ENCODE measurements at regions of chr11 and their contacts with region 1.

Region 1: GRCh38 chr11:133064152-133064877 is 468.0 kb downstream of the OPCML start:
- DNase-seq: peak; percentile 56 to 91 (median 83)
- ATAC-seq: peak; percentile 93 to 97 (median 94)
- H3K4me3 ChIP-seq: peak overlapping the region; percentile 14 to 70 (median 62)
- H3K27ac ChIP-seq: peak overlapping the region in 9 of 12 donors; percentile 36 to 75 (median 69)
- H3K4me1 ChIP-seq: peaks cover 0 to 14% (median 1%) of the 10 kb centered on the region in 12 donors
- H3K27me3 ChIP-seq: peaks cover 0 to 11% (median 0%) of the 10 kb centered on the region in 9 donors
- CTCF ChIP-seq: peak; percentile 57 to 79 (median 66)
- POLR2A ChIP-seq: no peak

Region 2: DNA sequence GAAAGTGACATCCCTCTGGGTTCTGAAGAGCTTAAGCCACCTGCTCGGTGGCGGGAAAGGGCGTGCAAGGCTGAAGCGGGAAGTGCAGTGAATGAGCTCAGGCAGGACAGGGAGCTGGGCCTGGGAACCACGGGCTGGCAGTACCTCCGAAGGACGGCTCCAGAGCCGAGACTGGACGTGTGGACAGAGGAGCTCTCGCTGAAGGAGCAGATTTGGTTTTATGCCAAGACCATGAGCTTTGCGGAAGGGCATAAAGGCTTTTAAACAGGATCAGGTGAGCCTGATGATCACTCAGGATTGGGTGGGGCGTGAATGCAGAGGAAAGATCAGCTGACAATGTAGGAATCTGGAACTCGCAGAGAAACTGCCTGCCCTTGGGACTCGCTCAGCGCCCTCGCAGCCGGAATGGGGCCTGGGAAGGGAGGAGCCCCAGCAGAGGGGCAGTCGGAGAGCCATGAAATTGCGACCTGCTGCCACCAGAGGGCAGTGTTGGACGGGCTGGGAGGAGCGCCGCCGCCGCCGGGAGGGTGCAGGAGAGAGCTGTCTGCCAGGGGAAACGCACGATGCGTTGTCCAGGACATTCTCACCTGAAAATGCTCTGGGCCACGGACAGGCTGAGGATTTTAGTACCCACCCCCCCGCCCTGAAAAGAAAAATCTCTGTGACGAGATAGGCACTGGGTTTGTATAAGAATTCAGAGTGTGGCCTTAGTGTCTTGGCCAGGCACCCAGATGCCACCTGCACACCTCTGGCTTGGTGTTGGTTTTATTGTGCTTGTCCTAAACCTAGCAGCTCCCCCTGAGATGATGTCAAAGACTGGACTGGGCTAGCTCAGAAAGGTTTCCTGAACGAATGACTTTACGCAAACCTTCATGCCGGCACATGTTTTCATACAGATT is 1369.5 kb before region 1 on chr11:
- intact Hi-C with region 1: loop called in 3 of 10 experiments (anchors 5 to 10 kb)
- DNase-seq: peak; percentile 79 to 89 (median 83)
- ATAC-seq: peak; percentile 80 to 94 (median 92)
- H3K4me3 ChIP-seq: peak overlapping the region in 5 of 12 donors; percentile 5 to 23 (median 16)
- H3K27ac ChIP-seq: peak overlapping the region in 1 of 12 donors; percentile 8
- H3K4me1 ChIP-seq: peaks cover 0 to 9% (median 4%) of the 10 kb centered on the region in 12 donors
- H3K27me3 ChIP-seq: peaks cover 0 to 53% (median 7%) of the 10 kb centered on the region in 9 donors
- CTCF ChIP-seq: peak; percentile 83 to 98 (median 95)
- POLR2A ChIP-seq: no peak

Region 3: GRCh38 chr11:131748151-131749050 is 1315.9 kb before region 1 on chr11:
- intact Hi-C with region 1: loop called in 1 of 10 experiments (anchors 5 kb)
- DNase-seq: peak in 3 of 5 donors; percentile 34 to 56 (median 45)
- ATAC-seq: peak in 3 of 4 donors; percentile 74 to 90 (median 75)
- H3K4me3 ChIP-seq: no peak overlapping the region
- H3K27ac ChIP-seq: no peak overlapping the region
- H3K4me1 ChIP-seq: peaks cover 0 to 14% (median 0%) of the 10 kb centered on the region in 12 donors
- H3K27me3 ChIP-seq: peaks cover 0 to 26% (median 0%) of the 10 kb centered on the region in 9 donors
- CTCF ChIP-seq: peak; percentile 58 to 85 (median 73)
- POLR2A ChIP-seq: no peak

Region 4: DNA sequence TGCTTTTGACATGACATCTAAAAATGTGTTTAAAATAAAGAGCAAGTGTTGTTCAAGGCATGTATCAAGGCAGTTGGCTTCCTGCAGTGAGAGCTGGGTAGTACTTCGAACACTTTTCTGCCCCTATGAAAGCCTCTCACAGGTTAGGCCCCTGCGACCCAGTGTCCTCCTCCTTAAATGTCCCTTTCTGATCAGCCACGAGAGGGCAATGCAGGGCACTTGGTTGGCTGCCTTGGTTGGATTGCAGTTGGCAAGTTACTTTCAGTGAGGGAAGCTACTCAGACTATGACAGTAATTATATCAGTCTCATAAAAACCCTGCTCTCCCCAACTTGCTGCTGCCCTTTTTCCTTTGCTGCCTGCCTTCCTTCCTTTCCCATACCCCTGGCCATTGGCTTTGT is 950.1 kb before region 1 on chr11:
- intact Hi-C with region 1: loop called in 1 of 10 experiments (anchors 5 kb)
- DNase-seq: peak in 3 of 5 donors; percentile 35 to 52 (median 41)
- ATAC-seq: peak; percentile 44 to 70 (median 66)
- H3K4me3 ChIP-seq: no peak overlapping the region
- H3K27ac ChIP-seq: no peak overlapping the region
- H3K4me1 ChIP-seq: peaks cover 0 to 17% (median 0%) of the 10 kb centered on the region in 12 donors
- H3K27me3 ChIP-seq: peaks cover 0 to 9% (median 0%) of the 10 kb centered on the region in 9 donors
- CTCF ChIP-seq: peak; percentile 25 to 57 (median 45)
- POLR2A ChIP-seq: no peak

Region 5: DNA sequence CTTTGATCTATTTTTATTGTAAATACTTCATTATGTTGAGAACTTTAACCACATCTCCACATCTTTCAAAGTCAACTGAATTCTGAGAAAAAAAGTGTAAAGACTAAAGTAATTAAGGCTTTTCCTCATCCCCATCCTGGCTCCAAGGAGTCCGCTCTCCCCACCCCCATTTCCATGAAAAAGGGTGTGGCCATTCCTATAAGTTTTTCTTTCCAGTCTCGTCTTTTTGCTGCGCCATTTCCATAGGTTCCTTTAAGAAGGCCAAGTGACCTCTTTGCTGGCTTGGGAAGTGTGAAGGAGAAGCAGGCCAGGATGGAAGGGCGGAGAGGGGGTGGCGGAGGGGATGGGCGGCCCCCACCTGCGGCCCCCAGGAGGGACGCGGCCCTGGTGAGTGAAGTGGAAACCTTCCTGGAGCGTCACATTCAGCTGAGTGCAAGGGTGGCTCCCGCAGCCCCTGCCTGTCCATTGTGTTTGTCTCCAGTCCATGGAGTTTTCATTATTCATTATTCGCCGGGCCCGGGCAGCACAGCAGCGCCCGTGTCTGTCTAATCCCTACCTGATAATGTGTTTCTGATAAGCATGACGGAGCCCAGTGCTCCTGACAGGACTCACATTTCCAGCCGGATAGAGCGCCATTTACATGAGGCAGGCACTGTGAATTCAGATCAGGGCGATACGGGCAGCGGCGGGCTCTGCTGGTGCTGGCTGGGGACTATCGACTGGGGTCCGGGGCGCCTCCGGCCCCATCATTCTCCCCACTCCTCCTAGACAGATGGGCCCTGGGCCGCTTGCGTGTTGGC is 271.8 kb before region 1 on chr11:
- intact Hi-C with region 1: no loop called
- DNase-seq: no peak
- ATAC-seq: peak in 2 of 4 donors; percentile 22 to 41
- H3K4me3 ChIP-seq: no peak overlapping the region
- H3K27ac ChIP-seq: no peak overlapping the region
- H3K4me1 ChIP-seq: no peaks in the 10 kb centered on the region
- H3K27me3 ChIP-seq: peaks cover 0 to 8% (median 0%) of the 10 kb centered on the region in 9 donors
- CTCF ChIP-seq: no peak
- POLR2A ChIP-seq: no peak

Region 6: GRCh38 chr11:132874638-132875037 is 189.7 kb before region 1 on chr11:
- intact Hi-C with region 1: no loop called
- DNase-seq: no peak
- ATAC-seq: no peak
- H3K4me3 ChIP-seq: no peak overlapping the region
- H3K27ac ChIP-seq: no peak overlapping the region
- H3K4me1 ChIP-seq: no peaks in the 10 kb centered on the region
- H3K27me3 ChIP-seq: no peaks in the 10 kb centered on the region
- CTCF ChIP-seq: no peak
- POLR2A ChIP-seq: no peak

Region 7: GRCh38 chr11:132972565-132972964 is 91.8 kb before region 1 on chr11:
- intact Hi-C with region 1: no loop called
- DNase-seq: no peak
- ATAC-seq: no peak
- H3K4me3 ChIP-seq: no peak overlapping the region
- H3K27ac ChIP-seq: no peak overlapping the region
- H3K4me1 ChIP-seq: no peaks in the 10 kb centered on the region
- H3K27me3 ChIP-seq: peaks cover 0 to 4% (median 0%) of the 10 kb centered on the region in 9 donors
- CTCF ChIP-seq: no peak
- POLR2A ChIP-seq: no peak

Region 8: DNA sequence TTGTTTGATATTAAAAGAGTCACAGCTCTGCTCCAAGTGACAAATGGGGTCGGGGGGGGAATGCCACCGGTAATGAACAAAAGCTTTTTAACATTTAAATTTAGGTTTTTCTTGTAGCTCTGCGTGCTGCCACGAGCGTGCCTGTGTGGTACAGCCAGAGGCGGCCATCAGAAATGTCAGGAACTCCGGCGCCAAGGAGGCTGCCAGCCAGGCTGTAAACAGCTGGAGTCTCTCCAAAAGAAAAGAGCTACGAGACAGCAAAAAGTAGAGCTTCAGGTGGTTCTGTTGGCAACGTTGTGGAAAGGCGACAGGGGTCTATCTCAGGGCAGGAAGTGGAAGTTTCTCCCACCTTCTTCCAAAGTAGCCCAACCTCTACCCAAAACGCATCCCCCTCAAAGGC is 64.8 kb before region 1 on chr11:
- intact Hi-C with region 1: no loop called
- DNase-seq: no peak
- ATAC-seq: no peak
- H3K4me3 ChIP-seq: no peak overlapping the region
- H3K27ac ChIP-seq: no peak overlapping the region
- H3K4me1 ChIP-seq: peaks cover 0 to under 1% (median 0%) of the 10 kb centered on the region in 12 donors
- H3K27me3 ChIP-seq: peaks cover 0 to 21% (median 13%) of the 10 kb centered on the region in 9 donors
- CTCF ChIP-seq: no peak
- POLR2A ChIP-seq: no peak